Activated CD4-positive, alpha-beta memory T cell treated with anti-CD3 and anti-CD28 coated beads, Interleukin-2, amount 10 ng/mL, durations not matched to agents 7 days and 5 days (primary cell): ENCODE measurements at regions of chr20 and their contacts with region 1.

Region 1: GRCh38 chr20:5205348-5206210 is 78.8 kb downstream of the CDS2 start:
- DNase-seq: peak; percentile 73
- H3K4me3 Mint-ChIP-seq: no peak overlapping the region
- H3K27ac Mint-ChIP-seq: no peak overlapping the region
- H3K4me1 Mint-ChIP-seq: no peaks in the 10 kb centered on the region
- H3K27me3 Mint-ChIP-seq: no peaks in the 10 kb centered on the region

Region 2: GRCh38 chr20:5126512-5127203 is 78.9 kb before region 1 on chr20 and contains the start of gene CDS2:
- CTCF ChIA-PET with region 1: interaction called, 16 read pairs
- POLR2A ChIA-PET with region 1: no interaction called
- DNase-seq: peak; percentile 100
- H3K4me3 Mint-ChIP-seq: peak within 1 kb of the TSS; percentile 97
- H3K27ac Mint-ChIP-seq: peak within 1 kb of the TSS; percentile 92
- H3K4me1 Mint-ChIP-seq: peaks cover 56% of the 10 kb centered on the region
- H3K27me3 Mint-ChIP-seq: no peaks in the 10 kb centered on the region
- total RNA-seq, gene CDS2: 67.4 to 68.2 TPM

Region 3: DNA sequence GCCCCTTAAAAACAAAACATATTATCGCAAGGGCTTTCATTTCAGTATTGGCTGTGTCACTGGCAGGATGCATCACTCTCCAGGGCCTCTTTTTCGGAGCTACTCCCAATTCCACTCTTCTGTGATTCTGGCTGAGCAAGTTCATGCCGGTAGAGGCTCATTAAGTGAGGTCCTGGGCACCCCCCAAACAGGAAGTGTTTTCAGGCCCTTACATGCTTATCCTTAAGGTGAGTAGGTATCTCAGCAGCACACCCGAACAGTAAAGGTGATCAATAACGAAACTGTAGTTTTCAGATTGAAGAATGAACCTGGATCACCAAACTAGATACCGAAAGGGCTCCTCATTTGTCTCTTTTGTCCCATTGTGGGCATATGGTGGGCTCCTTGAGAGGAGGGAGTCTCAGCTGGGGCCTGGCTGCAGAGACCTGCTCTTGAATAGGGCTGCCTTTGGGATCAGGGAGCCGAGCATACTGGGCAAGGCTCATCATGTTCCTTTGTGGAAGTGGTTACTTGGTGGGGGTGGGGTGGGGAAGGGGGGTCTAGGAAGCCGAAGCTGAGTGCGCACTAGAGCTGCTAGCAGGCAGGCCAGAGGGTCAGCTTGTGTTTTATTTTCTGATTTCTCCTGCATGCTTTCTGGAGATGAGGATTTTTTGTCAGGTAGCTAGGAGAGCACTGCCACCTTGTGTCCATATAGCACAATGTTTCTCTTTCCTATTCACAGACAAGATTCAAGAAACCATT is 13.6 kb before region 1 on chr20:
- CTCF ChIA-PET with region 1: interaction called, 10 read pairs
- POLR2A ChIA-PET with region 1: no interaction called
- DNase-seq: peak; percentile 48
- H3K4me3 Mint-ChIP-seq: no peak overlapping the region
- H3K27ac Mint-ChIP-seq: peak overlapping the region; percentile 60
- H3K4me1 Mint-ChIP-seq: peaks cover 28% of the 10 kb centered on the region
- H3K27me3 Mint-ChIP-seq: no peaks in the 10 kb centered on the region

Region 4: DNA sequence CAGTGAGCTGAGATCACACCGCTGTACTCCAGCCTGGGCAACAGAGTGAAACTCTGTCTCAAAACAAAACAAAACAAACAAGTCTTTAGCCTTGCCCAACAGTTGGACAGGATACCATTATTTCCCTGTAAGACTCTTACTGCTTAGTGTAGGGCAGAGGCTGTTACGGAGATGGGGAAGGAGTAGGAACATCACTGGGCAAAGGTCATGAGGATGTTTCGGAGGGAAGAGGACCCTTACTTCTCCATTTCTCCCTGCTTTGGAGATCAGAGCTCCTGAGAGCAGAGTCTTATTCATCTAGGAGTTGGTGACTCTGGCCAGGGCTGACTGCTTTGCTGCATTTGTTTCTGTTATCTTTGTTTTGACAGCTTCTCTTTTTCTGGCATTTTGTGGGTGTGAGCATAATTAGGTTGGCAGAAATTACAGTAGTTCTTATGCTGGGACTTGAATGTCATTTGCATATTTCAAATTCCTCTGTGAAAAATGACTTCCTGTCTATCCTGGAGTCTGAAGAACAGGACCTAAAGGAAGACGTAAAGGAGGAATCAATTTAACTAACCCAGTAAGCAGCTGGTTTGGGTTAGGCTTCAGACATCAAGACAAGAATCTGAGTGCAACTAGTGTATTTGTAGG is 10.2 kb after region 1 on chr20:
- CTCF ChIA-PET with region 1: interaction called, 109 read pairs
- POLR2A ChIA-PET with region 1: interaction called, 3 read pairs
- DNase-seq: no peak
- H3K4me3 Mint-ChIP-seq: no peak overlapping the region
- H3K27ac Mint-ChIP-seq: no peak overlapping the region
- H3K4me1 Mint-ChIP-seq: no peaks in the 10 kb centered on the region
- H3K27me3 Mint-ChIP-seq: no peaks in the 10 kb centered on the region

Region 5: DNA sequence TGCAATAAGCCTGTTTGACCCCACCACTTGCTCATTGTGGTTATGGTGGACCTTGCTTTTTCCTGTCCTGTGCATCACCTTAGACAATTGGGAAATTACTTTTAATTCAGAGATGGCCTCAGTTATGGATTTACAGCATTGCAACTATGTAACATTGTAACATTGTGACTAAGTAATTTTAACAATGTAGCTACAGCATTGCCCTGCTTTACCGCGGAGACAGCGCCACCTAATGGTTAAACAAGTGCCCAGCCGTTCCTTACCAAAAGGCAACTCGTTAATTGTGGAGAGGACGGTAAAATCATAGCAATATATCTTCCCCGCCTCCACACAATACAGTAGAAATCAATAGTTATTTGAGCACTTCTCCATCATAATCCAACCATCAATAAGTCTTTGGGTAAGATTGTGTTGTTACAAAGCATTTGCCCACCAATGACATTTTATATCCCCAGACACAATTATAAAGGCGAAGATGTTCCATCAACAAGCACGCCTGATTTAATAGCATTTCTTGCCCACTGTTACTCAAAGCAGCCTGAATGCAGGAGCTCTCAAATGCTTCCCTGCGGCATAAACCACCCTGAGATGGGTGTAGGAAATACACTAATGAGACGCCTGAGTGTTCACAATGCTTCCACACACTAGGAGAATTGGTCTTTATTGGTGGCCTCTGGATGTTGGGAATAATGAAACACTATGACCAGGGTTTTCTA is 17.5 kb after region 1 on chr20:
- CTCF ChIA-PET with region 1: interaction called, 109 read pairs
- POLR2A ChIA-PET with region 1: no interaction called
- DNase-seq: peak; percentile 67
- H3K4me3 Mint-ChIP-seq: no peak overlapping the region
- H3K27ac Mint-ChIP-seq: no peak overlapping the region
- H3K4me1 Mint-ChIP-seq: no peaks in the 10 kb centered on the region
- H3K27me3 Mint-ChIP-seq: no peaks in the 10 kb centered on the region

Region 6: GRCh38 chr20:5448449-5449118 is 243.0 kb after region 1 on chr20:
- CTCF ChIA-PET with region 1: interaction called, 18 read pairs
- POLR2A ChIA-PET with region 1: no interaction called
- DNase-seq: peak; percentile 50
- H3K4me3 Mint-ChIP-seq: no peak overlapping the region
- H3K27ac Mint-ChIP-seq: no peak overlapping the region
- H3K4me1 Mint-ChIP-seq: no peaks in the 10 kb centered on the region
- H3K27me3 Mint-ChIP-seq: peaks cover 15% of the 10 kb centered on the region